Activated naive CD4-positive, alpha-beta T cell treated with anti-CD3 and anti-CD28 coated beads for 36 hours (primary cell): ENCODE measurements at regions of chr1 and their contacts with region 1.

Region 1: GRCh38 chr1:99808391-99809115 is 41.6 kb upstream of the AGL start:
- DNase-seq: peak; percentile 53
- H3K4me3 Mint-ChIP-seq: no peak overlapping the region
- H3K27ac Mint-ChIP-seq: no peak overlapping the region
- H3K4me1 Mint-ChIP-seq: peaks cover 8% of the 10 kb centered on the region
- H3K27me3 Mint-ChIP-seq: peaks cover 2% of the 10 kb centered on the region

Region 2: GRCh38 chr1:99829269-99829668 is 20.7 kb after region 1 on chr1:
- CTCF ChIA-PET with region 1: no interaction called
- intact Hi-C with region 1: loop called (anchors 2 kb)
- DNase-seq: no peak
- H3K4me3 Mint-ChIP-seq: no peak overlapping the region
- H3K27ac Mint-ChIP-seq: no peak overlapping the region
- H3K4me1 Mint-ChIP-seq: no peaks in the 10 kb centered on the region
- H3K27me3 Mint-ChIP-seq: peaks cover 6% of the 10 kb centered on the region

Region 3: DNA sequence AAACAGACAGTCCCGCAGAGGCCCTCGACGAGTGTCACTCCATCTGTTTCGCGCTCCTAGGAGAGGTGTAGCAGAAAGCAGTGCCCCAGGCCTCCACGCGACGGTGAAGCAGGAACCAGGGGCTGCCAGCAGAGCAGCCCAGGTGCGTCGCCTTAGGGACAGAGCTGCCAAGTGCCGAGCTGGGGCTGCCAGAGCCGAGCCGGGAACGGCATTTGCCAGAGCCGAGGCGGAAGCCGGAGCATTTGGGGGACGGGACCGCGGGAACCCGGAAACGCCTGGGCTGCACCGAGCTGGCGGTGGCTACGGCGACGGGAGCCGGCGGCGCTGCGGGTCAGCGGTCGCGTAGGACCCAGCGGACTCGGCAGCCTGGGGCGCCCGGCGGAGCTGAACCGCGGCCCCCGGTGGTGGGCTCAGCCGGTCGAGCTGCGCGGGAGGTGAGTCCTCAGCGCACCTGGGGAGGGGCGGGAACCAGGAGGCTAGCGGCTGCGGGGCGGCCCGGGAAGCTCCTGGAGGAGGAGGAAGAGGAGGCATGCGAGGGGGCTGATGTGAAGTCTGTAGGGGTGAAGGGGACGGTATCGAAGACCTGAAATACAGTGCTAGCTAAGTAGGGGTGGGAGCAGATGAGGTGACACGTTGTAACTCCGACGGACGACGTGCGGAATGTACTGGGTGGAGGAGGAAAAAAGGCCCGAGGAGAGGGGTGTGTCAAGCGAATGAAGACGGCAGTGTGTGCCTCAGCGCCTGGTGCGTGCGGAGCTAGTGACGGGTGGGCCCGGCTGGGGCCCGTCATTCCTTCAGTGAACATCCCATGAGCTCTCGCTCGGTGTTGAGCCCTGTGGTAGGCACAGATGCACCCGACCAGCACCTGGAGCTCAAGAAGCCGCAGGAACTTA is 161.4 kb after region 1 on chr1 and contains the start of gene SLC35A3:
- CTCF ChIA-PET with region 1: no interaction called
- intact Hi-C with region 1: loop called (anchors 2 kb)
- DNase-seq: peak; percentile 85
- H3K4me3 Mint-ChIP-seq: peak within 1 kb of the TSS; percentile 96
- H3K27ac Mint-ChIP-seq: peak within 1 kb of the TSS; percentile 85
- H3K4me1 Mint-ChIP-seq: peaks cover 22% of the 10 kb centered on the region
- H3K27me3 Mint-ChIP-seq: no peaks in the 10 kb centered on the region
- total RNA-seq, gene SLC35A3: 13.8 to 15.5 TPM

Region 4: DNA sequence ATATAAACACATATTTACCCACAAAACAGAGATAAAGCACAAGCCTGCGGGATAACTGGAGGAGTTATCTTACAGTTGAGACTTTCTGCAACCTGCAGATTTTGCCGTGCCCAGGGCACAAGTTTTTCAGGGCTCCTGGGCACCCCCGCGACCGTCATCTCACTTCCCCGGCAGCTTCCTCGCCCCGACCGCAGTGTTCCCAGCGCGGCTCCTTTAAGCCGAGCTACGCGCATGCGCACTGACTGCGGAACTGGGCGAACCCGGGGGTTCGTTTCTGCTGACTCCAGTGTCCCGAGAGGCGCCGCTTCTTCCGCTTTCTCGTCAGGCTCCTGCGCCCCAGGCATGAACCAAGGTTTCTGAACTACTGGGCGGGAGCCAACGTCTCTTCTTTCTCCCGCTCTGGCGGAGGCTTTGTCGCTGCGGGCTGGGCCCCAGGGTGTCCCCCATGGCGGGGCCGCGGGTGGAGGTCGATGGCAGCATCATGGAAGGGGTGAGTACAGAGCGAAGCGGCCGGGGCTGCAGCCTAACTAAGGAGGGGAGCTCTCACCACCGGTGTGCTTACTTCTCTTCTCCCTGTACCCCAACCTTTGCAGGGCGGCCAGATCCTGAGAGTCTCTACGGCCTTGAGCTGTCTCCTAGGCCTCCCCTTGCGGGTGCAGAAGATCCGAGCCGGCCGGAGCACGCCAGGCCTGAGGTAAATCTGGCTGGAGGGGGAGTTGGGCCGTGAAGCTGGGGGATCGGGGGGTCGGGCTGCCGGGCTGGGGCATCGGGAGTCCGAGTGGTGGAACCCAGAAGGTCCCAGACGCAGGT is 457.6 kb after region 1 on chr1 and contains the start of gene RTCA:
- CTCF ChIA-PET with region 1: no interaction called
- intact Hi-C with region 1: loop called (anchors 5 kb)
- DNase-seq: peak; percentile 96
- H3K4me3 Mint-ChIP-seq: peak within 1 kb of the TSS; percentile 100
- H3K27ac Mint-ChIP-seq: peak within 1 kb of the TSS; percentile 96
- H3K4me1 Mint-ChIP-seq: peaks cover 35% of the 10 kb centered on the region
- H3K27me3 Mint-ChIP-seq: no peaks in the 10 kb centered on the region
- total RNA-seq, gene RTCA: 36.7 to 37.5 TPM

Region 5: DNA sequence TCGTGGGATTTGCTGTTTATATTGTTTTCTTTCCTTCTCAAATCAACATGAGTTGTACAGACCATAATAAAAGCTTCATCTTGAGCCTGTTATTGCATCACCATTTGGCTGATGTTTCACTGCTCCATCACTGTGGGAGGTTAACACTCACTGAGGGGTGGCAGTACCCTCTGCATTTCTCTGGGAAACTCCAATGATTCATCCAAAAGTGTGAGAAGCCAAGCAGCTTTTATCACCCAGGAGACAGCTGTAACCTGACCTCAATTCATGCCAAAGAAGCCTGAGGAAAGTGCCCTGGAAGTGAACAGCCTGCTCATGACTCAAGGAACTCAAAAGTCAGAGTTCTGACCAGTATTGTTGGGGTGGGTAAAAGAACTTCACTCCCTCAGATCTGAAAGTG is 813.5 kb after region 1 on chr1:
- CTCF ChIA-PET with region 1: no interaction called
- intact Hi-C with region 1: loop called (anchors 10 kb)
- DNase-seq: peak; percentile 40
- H3K4me3 Mint-ChIP-seq: no peak overlapping the region
- H3K27ac Mint-ChIP-seq: no peak overlapping the region
- H3K4me1 Mint-ChIP-seq: peaks cover 9% of the 10 kb centered on the region
- H3K27me3 Mint-ChIP-seq: no peaks in the 10 kb centered on the region

Region 6: GRCh38 chr1:100895540-100896483 is 1087.3 kb after region 1 on chr1 and contains the start of gene SLC30A7:
- CTCF ChIA-PET with region 1: no interaction called
- intact Hi-C with region 1: loop called (anchors 1 kb)
- DNase-seq: peak; percentile 98
- H3K4me3 Mint-ChIP-seq: peak within 1 kb of the TSS; percentile 100
- H3K27ac Mint-ChIP-seq: peak within 1 kb of the TSS; percentile 100
- H3K4me1 Mint-ChIP-seq: peaks cover 37% of the 10 kb centered on the region
- H3K27me3 Mint-ChIP-seq: no peaks in the 10 kb centered on the region
- total RNA-seq, gene SLC30A7: 32.4 to 32.6 TPM